Endothelial cell of umbilical vein (primary cell): ENCODE measurements at regions of chr3 and their contacts with region 1.

Region 1: DNA sequence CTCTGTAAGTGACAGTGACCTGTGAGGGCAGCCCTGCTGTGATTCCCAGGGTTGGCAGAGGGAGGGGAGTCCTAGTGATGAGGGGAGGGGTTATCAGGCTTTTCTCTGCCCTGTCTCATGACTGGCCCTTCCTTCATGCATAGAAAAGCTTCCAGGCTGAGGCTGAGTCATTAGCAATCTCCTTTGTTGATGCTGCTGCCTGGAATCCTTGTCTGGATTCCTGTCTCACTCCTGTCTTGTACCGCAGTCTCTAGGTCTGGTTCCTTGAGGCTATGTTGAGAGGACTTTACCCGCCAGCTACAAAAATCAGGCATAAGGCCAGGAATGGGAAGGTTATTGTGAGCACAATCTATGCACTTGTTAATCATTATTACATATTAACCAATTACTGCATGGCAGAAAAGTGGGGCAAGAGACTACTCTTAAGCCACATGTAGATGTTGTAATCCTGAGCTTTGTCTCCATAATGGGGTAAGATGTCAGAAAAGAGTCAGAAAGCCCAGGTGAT is 7.2 kb downstream of the KLHL6 start:
- DNase-seq: peak; percentile 94
- H3K4me3 ChIP-seq: no peak overlapping the region
- H3K27ac ChIP-seq: peak overlapping the region; percentile 81
- H3K4me1 ChIP-seq: peaks cover 32% of the 10 kb centered on the region
- H3K27me3 ChIP-seq: no peaks in the 10 kb centered on the region
- CTCF ChIP-seq: no peak
- POLR2A ChIP-seq: no peak

Region 2: GRCh38 chr3:183108001-183108449 is 440.3 kb before region 1 on chr3:
- CTCF ChIA-PET with region 1: no interaction called
- POLR2A ChIA-PET with region 1: no interaction called
- dilution Hi-C with region 1: no loop called
- intact Hi-C with region 1: no loop called
- DNase-seq: peak; percentile 41
- H3K4me3 ChIP-seq: no peak overlapping the region
- H3K27ac ChIP-seq: no peak overlapping the region
- H3K4me1 ChIP-seq: peaks cover 6% of the 10 kb centered on the region
- H3K27me3 ChIP-seq: no peaks in the 10 kb centered on the region
- CTCF ChIP-seq: no peak
- POLR2A ChIP-seq: no peak

Region 3: DNA sequence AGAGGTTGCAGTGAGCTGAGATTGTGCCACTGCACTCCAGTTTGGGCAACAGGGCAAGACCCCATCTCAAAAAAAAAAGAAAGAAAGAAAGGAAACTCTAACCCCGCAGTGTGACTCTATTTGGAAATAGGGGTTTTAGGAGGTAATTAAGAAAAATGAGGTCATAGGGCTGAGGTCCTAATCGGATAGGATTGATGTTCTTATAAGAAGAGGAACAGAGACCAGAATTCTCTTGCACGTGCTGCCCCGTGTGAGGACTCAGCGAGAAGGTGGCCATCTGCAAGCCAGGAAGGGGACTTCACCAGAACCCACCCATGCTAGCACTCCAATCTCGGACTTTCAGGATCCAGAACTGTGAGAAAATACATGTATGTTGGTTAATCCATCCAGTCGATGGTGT is 18.6 kb before region 1 on chr3:
- CTCF ChIA-PET with region 1: interaction called, 3 read pairs
- POLR2A ChIA-PET with region 1: no interaction called
- dilution Hi-C with region 1: no loop called
- intact Hi-C with region 1: loop called (anchors 2 kb)
- DNase-seq: no peak
- H3K4me3 ChIP-seq: no peak overlapping the region
- H3K27ac ChIP-seq: no peak overlapping the region
- H3K4me1 ChIP-seq: peaks cover 34% of the 10 kb centered on the region
- H3K27me3 ChIP-seq: no peaks in the 10 kb centered on the region
- CTCF ChIP-seq: no peak
- POLR2A ChIP-seq: no peak

Region 4: GRCh38 chr3:183576487-183577107 is 28.3 kb after region 1 on chr3:
- CTCF ChIA-PET with region 1: no interaction called
- POLR2A ChIA-PET with region 1: no interaction called
- dilution Hi-C with region 1: no loop called
- intact Hi-C with region 1: no loop called
- DNase-seq: peak; percentile 30
- H3K4me3 ChIP-seq: no peak overlapping the region
- H3K27ac ChIP-seq: no peak overlapping the region
- H3K4me1 ChIP-seq: peaks cover 11% of the 10 kb centered on the region
- H3K27me3 ChIP-seq: peaks cover 24 to 31% of the 10 kb centered on the region in 2 experiments
- CTCF ChIP-seq: no peak
- POLR2A ChIP-seq: no peak